Naive thymus-derived CD4-positive, alpha-beta T cell (primary cell): ENCODE measurements at regions of chr2 and their contacts with region 1.

Region 1: DNA sequence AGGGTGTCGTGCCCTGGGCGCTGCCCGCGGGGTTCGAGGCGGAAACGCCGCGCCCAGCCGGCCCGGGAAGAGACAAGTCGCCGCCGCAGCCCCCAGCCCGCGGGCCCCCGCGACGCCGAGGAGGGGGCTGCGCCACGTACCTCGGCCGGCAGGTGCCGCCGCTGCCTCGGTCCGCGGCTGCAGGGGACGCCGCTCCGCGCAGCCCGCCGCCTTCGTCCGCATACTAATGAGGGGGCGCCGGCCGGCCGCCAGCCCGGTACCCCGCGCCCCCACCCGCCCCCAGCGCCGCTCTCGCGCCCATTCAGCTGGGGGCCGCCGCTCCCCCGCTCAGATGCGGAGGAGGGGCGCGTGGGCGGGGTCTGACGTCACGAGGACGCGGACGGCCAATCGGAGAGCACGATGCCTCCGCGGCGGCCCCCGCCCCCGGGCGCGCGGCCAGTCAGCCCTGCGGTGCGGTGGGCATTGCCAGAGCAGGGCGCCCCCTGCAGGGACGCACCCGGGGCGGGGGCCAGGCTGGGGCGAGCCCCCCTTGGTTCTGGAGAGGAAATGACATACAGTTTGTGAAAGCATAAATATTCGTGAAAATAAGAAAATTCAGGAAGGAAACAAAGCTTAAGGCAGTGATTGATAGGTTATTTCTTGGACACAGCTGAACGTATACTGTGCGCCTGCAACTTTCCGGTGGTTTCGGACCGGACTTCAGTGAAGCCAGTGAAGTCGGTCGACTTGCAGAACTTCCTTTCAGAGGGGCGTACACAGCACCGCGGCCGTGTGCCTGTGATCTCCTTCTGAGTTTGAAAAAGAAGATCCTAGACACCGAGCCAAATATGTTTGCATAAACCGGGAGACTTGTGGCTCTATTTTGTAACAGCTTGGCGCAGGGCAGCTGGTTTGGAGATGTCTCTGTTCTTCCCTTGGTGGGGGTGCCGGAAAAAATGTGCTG is at the start of gene ST3GAL5:
- DNase-seq: peak; percentile 89 to 96 (median 93)
- ATAC-seq: peak; percentile 95
- H3K4me3 ChIP-seq: peak within 1 kb of the TSS; percentile 77
- H3K4me3 Mint-ChIP-seq: peak within 1 kb of the TSS; percentile 88 to 100 (median 96)
- H3K27ac ChIP-seq: peak within 1 kb of the TSS; percentile 93
- H3K27ac Mint-ChIP-seq: peak within 1 kb of the TSS; percentile 89 to 99 (median 98)
- H3K4me1 ChIP-seq: peaks cover 24 to 47% of the 10 kb centered on the region in 2 donors
- H3K4me1 Mint-ChIP-seq: peaks cover 48 to 77% (median 72%) of the 10 kb centered on the region in 7 donors
- H3K27me3 ChIP-seq: no peaks in the 10 kb centered on the region
- H3K27me3 Mint-ChIP-seq: no peaks in the 10 kb centered on the region
- total RNA-seq, gene ST3GAL5: 37.9 to 53.6 (median 43.0) TPM

Region 2: GRCh38 chr2:85538486-85539360 is 350.2 kb before region 1 on chr2 and contains the start of gene MAT2A:
- CTCF ChIA-PET with region 1: no interaction called
- POLR2A ChIA-PET with region 1: no interaction called
- intact Hi-C with region 1: loop called in 1 of 2 experiments (anchors 5 kb)
- DNase-seq: peak; percentile 72 to 96 (median 88)
- ATAC-seq: peak; percentile 87
- H3K4me3 ChIP-seq: peak within 1 kb of the TSS; percentile 92
- H3K4me3 Mint-ChIP-seq: peak within 1 kb of the TSS; percentile 91 to 98 (median 95)
- H3K27ac ChIP-seq: peak within 1 kb of the TSS; percentile 84
- H3K27ac Mint-ChIP-seq: peak within 1 kb of the TSS; percentile 90 to 97 (median 94)
- H3K4me1 ChIP-seq: peaks cover 19 to 27% of the 10 kb centered on the region in 2 donors
- H3K4me1 Mint-ChIP-seq: peaks cover 14 to 58% (median 47%) of the 10 kb centered on the region in 7 donors
- H3K27me3 ChIP-seq: no peaks in the 10 kb centered on the region
- H3K27me3 Mint-ChIP-seq: no peaks in the 10 kb centered on the region
- total RNA-seq, gene MAT2A: 96.3 to 268 (median 178) TPM

Region 3: GRCh38 chr2:85826990-85827878 is 61.7 kb before region 1 on chr2:
- CTCF ChIA-PET with region 1: interaction called, 123 read pairs
- POLR2A ChIA-PET with region 1: interaction called, 16 read pairs
- intact Hi-C with region 1: loop called (anchors 1 kb)
- DNase-seq: peak; percentile 64 to 83 (median 79)
- ATAC-seq: peak; percentile 99
- H3K4me3 ChIP-seq: peak overlapping the region; percentile 49
- H3K4me3 Mint-ChIP-seq: peak overlapping the region in 7 of 10 donors; percentile 8 to 65 (median 55)
- H3K27ac ChIP-seq: no peak overlapping the region
- H3K27ac Mint-ChIP-seq: peak overlapping the region in 8 of 9 donors; percentile 7 to 70 (median 63)
- H3K4me1 ChIP-seq: peaks cover 4 to 5% of the 10 kb centered on the region in 2 donors
- H3K4me1 Mint-ChIP-seq: peaks cover 18 to 31% (median 25%) of the 10 kb centered on the region in 7 donors
- H3K27me3 ChIP-seq: no peaks in the 10 kb centered on the region
- H3K27me3 Mint-ChIP-seq: peaks cover 0 to 31% (median 0%) of the 10 kb centered on the region in 5 donors

Region 4: GRCh38 chr2:85865539-85866164 is 23.3 kb before region 1 on chr2:
- CTCF ChIA-PET with region 1: interaction called, 18 read pairs
- POLR2A ChIA-PET with region 1: interaction called, 9 read pairs
- intact Hi-C with region 1: no loop called
- DNase-seq: no peak
- ATAC-seq: no peak
- H3K4me3 ChIP-seq: no peak overlapping the region
- H3K4me3 Mint-ChIP-seq: peak overlapping the region in 1 of 10 donors; percentile 38
- H3K27ac ChIP-seq: no peak overlapping the region
- H3K27ac Mint-ChIP-seq: peak overlapping the region; percentile 1 to 94 (median 51)
- H3K4me1 ChIP-seq: peaks cover 15 to 32% of the 10 kb centered on the region in 2 donors
- H3K4me1 Mint-ChIP-seq: peaks cover 19 to 84% (median 62%) of the 10 kb centered on the region in 7 donors
- H3K27me3 ChIP-seq: no peaks in the 10 kb centered on the region
- H3K27me3 Mint-ChIP-seq: no peaks in the 10 kb centered on the region

Region 5: GRCh38 chr2:85902496-85902895 is 13.5 kb after region 1 on chr2:
- CTCF ChIA-PET with region 1: interaction called, 8 read pairs
- POLR2A ChIA-PET with region 1: interaction called, 31 read pairs
- intact Hi-C with region 1: loop called in 1 of 2 experiments (anchors 1 kb)
- DNase-seq: no peak
- ATAC-seq: no peak
- H3K4me3 ChIP-seq: no peak overlapping the region
- H3K4me3 Mint-ChIP-seq: no peak overlapping the region
- H3K27ac ChIP-seq: no peak overlapping the region
- H3K27ac Mint-ChIP-seq: peak overlapping the region in 2 of 9 donors; percentile 2 to 63
- H3K4me1 ChIP-seq: peaks cover 0 to 7% of the 10 kb centered on the region in 2 donors
- H3K4me1 Mint-ChIP-seq: peaks cover 6 to 41% (median 23%) of the 10 kb centered on the region in 7 donors
- H3K27me3 ChIP-seq: no peaks in the 10 kb centered on the region
- H3K27me3 Mint-ChIP-seq: peaks cover 0 to 4% (median 0%) of the 10 kb centered on the region in 5 donors

Region 6: GRCh38 chr2:85999061-85999831 is 110.3 kb after region 1 on chr2:
- CTCF ChIA-PET with region 1: no interaction called
- POLR2A ChIA-PET with region 1: interaction called, 5 read pairs
- intact Hi-C with region 1: loop called in 1 of 2 experiments (anchors 1 kb)
- DNase-seq: peak in 8 of 9 donors; percentile 25 to 62 (median 46)
- ATAC-seq: peak; percentile 83
- H3K4me3 ChIP-seq: peak overlapping the region; percentile 33
- H3K4me3 Mint-ChIP-seq: peak overlapping the region; percentile 55 to 83 (median 68)
- H3K27ac ChIP-seq: peak overlapping the region; percentile 66
- H3K27ac Mint-ChIP-seq: peak overlapping the region; percentile 85 to 96 (median 93)
- H3K4me1 ChIP-seq: peaks cover 48 to 52% of the 10 kb centered on the region in 2 donors
- H3K4me1 Mint-ChIP-seq: peaks cover 36 to 79% (median 64%) of the 10 kb centered on the region in 7 donors
- H3K27me3 ChIP-seq: no peaks in the 10 kb centered on the region
- H3K27me3 Mint-ChIP-seq: no peaks in the 10 kb centered on the region

Region 7: DNA sequence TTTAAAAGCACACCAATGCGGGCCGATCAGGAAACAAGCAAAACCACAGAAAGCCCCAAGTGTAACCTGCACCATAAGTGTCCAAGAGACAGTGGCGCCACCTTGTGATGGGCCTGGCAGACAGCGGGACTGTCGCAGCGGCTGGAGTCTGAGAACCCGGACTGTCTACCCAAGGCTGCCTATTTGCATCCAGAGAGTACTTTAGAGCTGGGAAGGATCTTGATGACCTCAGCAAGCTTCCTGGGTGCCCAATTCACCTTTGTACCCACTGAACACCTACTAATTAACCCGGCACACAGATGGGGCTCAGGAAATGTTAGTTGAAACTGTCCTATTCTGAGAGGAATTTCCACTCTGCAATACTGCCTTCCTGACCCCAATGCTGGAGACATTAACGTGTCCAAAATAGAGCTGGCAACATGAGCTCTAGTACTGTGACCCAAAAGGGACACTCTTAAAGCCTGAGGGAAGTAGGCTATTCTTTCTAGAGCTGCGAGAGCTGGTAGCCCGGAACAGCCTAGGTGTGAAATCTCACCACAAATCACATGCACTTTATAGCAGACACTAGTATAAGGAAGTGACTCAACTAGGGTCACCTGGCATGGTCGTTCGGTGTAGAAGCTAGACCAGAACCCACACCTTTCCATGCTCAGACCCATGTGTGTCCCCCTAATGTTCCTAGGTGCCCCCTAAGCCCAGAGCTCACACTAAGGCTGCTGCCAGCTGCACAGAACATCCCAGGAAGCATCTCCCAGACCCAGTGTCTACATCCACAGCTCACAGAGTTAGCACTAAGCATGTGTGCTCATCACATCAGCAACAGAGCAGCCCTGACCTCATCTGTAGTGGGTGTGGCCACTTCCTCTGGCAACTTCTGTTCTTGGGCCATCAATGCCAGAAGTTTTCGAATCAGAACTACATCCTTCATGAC is 191.3 kb after region 1 on chr2:
- CTCF ChIA-PET with region 1: interaction called, 76 read pairs
- POLR2A ChIA-PET with region 1: interaction called, 4 read pairs
- intact Hi-C with region 1: loop called (anchors 1 kb)
- DNase-seq: peak; percentile 65 to 83 (median 78)
- ATAC-seq: peak; percentile 85
- H3K4me3 ChIP-seq: no peak overlapping the region
- H3K4me3 Mint-ChIP-seq: peak overlapping the region in 3 of 10 donors; percentile 36 to 40 (median 37)
- H3K27ac ChIP-seq: no peak overlapping the region
- H3K27ac Mint-ChIP-seq: peak overlapping the region in 5 of 9 donors; percentile 19 to 75 (median 53)
- H3K4me1 ChIP-seq: peaks cover 10 to 22% of the 10 kb centered on the region in 2 donors
- H3K4me1 Mint-ChIP-seq: peaks cover 0 to 46% (median 30%) of the 10 kb centered on the region in 7 donors
- H3K27me3 ChIP-seq: no peaks in the 10 kb centered on the region
- H3K27me3 Mint-ChIP-seq: no peaks in the 10 kb centered on the region

Region 8: DNA sequence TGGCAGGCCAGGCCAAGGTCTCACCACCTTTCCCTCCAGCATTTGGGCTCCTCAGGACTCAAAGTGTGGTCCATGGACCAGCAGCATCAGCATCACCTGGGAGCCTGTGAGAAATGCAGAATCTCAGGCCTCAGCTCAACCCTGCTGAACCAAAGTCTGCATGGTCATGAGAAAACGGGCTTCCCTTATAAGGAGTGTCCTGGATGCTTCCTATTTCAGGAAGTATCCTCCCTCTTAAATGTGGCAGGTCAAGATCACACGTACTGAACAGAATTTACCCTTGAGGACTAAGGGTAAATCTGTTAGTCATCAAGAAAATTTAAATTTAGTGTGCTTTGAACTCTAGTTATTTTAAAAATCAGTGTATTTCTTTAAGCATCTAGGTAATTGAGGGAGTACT is 890.0 kb after region 1 on chr2:
- CTCF ChIA-PET with region 1: no interaction called
- POLR2A ChIA-PET with region 1: no interaction called
- intact Hi-C with region 1: no loop called
- DNase-seq: no peak
- ATAC-seq: no peak
- H3K4me3 ChIP-seq: no peak overlapping the region
- H3K4me3 Mint-ChIP-seq: no peak overlapping the region
- H3K27ac ChIP-seq: no peak overlapping the region
- H3K27ac Mint-ChIP-seq: no peak overlapping the region
- H3K4me1 ChIP-seq: peaks cover 0 to 7% of the 10 kb centered on the region in 2 donors
- H3K4me1 Mint-ChIP-seq: peaks cover 0 to 2% (median 0%) of the 10 kb centered on the region in 7 donors
- H3K27me3 ChIP-seq: no peaks in the 10 kb centered on the region
- H3K27me3 Mint-ChIP-seq: no peaks in the 10 kb centered on the region